ENCODE measurements at regions of chr1 and their contacts with region 1.

Region 1: DNA sequence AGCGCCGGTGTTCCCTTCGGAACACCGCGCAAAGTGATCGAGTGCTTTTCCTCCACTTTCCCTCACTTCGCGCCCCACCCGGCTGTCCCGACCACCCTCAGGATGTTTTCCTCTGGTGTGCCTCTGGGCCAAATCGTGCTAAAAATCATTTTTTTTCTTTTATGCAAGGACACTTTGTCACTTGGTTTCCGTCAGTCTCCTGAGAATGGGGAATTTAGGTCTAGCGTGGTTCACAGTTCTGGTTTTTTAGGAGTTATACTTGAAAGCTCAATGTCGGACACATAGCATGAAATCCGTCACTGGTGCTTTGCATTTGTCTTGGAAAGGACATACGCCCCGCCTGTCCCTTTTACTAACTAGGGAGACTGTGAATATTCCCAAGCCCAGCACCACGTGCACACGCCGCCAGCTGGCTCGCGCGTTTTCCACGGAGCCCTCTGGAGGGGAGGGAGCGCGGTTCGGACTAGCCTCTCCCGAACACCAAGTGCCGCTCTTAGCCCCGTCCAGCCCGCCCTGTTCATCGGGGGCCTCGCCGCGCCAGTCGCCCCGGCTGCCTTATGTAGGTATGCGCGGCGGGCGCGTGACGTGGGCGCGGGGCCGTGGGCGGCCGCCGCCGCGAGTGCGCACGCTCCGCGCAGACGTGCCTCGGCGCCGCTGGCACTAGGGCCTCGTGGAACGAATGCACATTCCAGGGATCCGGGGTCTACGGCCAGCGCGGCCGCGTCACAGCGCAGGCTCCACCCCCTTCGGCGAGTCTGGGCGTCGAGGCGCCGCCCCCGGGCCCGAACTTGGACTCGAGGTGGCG is 572 bp upstream of the IRF2BP2 start:
- DNase-seq: peak; percentile 93
- H3K4me3 ChIP-seq: peak overlapping the region; percentile 43 to 48
- H3K27ac ChIP-seq: peak overlapping the region; percentile 98 to 99
- H3K4me1 ChIP-seq: peaks cover 9% of the 10 kb centered on the region
- H3K27me3 ChIP-seq: no peaks in the 10 kb centered on the region
- CTCF ChIP-seq: peak in 2 of 4 experiments; percentile 28 to 42
- POLR2A ChIP-seq: peak; percentile 92

Region 2: DNA sequence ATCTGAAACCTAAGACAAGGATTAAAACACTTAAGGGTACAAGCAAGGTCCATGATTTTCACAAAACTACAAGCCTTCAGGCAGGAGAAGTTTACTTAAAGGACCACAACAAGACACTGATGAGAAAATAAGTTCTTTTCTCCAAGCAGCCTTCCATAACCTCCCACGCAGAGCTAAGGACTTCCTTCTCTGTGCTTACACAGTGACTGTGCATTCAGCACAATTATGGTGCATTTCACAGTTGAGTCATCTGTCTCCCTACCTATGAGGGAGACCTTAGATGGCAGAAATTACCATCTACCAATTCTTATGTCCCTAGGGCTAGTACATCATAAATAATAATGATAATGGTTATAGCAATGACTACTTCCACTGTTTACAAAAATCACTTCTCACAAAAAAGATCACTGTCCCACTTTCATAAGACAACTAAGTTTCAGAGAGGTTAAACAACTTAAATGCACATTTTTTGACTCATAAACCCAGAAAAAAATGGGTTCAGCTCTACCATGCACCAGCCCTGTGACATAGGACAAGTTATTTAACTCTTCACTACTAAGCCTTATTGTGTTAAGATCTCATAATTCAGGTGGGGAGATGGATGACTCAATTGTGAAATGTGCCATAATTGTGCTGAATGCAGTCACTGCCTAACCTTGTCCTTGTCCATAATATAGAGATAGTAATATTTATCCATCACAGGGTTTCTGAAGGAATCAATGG is 176.8 kb before region 1 on chr1:
- intact Hi-C with region 1: no loop called
- DNase-seq: no peak
- H3K4me3 ChIP-seq: no peak overlapping the region
- H3K27ac ChIP-seq: no peak overlapping the region
- H3K4me1 ChIP-seq: no peaks in the 10 kb centered on the region
- H3K27me3 ChIP-seq: no peaks in the 10 kb centered on the region
- CTCF ChIP-seq: no peak
- POLR2A ChIP-seq: no peak

Region 3: DNA sequence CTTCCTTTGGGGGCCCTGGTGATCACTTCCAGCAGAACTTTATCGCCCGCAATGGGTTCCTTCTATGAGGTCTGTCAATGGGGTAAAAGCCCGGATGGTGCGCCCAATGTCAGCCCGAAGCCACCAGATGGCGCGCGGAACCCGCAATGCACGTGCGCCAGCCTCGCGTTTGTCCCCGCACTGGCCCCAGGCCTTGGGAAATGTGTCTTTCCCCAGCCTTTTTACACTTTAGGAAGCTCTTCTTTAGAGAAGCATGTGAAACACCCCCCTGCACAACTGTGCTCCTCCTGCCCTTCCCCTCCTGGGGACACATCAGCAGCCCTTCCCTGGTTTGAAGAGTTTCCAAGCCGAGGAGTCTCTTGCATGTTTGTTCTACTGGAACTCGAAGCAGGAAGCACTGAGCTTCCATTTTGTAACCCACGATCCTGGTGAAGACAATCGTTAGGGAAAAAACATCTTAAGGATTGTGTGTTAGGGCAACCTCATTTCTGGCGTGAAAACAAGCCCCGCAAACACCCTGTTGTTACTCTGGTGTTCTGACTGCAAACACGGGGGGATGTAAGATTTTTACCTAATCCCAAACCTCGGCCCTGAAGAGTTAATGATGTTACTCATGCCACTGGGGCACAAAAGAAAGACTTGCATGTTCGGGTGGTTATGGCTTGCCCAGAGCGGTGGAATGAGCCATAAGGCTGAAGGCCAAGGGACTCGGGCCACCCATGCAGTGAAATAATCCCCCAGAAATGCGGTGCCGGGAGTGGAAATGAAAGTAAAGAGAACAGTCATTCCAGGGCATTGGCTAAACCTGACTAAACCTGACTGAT is 111.2 kb before region 1 on chr1:
- intact Hi-C with region 1: loop called (anchors 5 kb)
- DNase-seq: peak; percentile 91
- H3K4me3 ChIP-seq: no peak overlapping the region
- H3K27ac ChIP-seq: peak overlapping the region; percentile 75 to 84
- H3K4me1 ChIP-seq: peaks cover 4% of the 10 kb centered on the region
- H3K27me3 ChIP-seq: no peaks in the 10 kb centered on the region
- CTCF ChIP-seq: peak; percentile 89 to 99 (median 96)
- POLR2A ChIP-seq: no peak

Region 4: DNA sequence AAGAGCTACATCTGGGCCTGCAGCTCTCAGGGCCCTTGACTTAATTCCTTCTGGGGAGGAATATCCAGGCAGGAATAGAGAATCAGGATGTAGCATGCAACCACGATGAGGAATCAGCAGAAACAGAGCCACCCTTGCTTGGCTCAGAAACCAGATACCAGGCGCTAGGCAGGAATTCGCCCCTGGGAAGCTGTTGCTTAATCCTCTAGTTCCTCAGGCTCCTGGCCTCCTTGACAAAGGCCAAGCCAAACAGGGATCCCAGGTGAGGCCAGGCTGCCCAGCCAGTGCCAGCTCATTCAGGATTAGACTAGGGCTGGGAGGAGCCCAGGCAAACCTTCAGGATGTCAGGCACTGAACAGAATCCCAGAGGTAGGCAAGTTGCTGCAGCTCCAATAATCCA is 47.6 kb after region 1 on chr1:
- intact Hi-C with region 1: no loop called
- DNase-seq: peak; percentile 54
- H3K4me3 ChIP-seq: no peak overlapping the region
- H3K27ac ChIP-seq: peak overlapping the region; percentile 44 to 57
- H3K4me1 ChIP-seq: peaks cover 3% of the 10 kb centered on the region
- H3K27me3 ChIP-seq: no peaks in the 10 kb centered on the region
- CTCF ChIP-seq: no peak
- POLR2A ChIP-seq: no peak

Region 5: DNA sequence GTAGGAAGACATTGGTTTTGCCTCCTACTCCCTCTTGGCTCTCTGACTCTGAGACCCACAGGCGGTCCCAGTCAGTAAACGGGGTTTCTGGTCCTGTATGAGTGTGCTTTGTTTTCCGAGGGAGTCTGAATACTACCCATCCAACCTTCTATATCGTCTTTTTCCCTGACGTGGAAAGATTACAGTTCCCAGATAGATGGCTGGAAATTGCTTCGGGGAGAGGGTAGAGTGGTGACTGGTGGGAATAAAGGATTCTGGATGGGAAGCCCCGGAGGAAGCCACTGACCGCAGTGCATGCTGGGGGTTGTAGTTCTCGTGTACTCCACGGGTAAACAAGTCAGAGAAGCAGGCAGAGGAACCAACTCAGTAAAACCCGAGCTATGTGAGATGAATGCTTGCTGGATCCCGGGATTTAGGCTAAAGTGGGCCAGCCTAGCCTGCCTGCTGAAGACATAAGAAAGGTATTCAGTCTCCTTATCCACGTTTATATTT is 65.6 kb after region 1 on chr1:
- intact Hi-C with region 1: no loop called
- DNase-seq: peak; percentile 33
- H3K4me3 ChIP-seq: no peak overlapping the region
- H3K27ac ChIP-seq: no peak overlapping the region
- H3K4me1 ChIP-seq: no peaks in the 10 kb centered on the region
- H3K27me3 ChIP-seq: no peaks in the 10 kb centered on the region
- CTCF ChIP-seq: no peak
- POLR2A ChIP-seq: no peak

Region 6: GRCh38 chr1:234862944-234863515 is 252.5 kb after region 1 on chr1:
- intact Hi-C with region 1: loop called (anchors 5 kb)
- DNase-seq: peak; percentile 86
- H3K4me3 ChIP-seq: no peak overlapping the region
- H3K27ac ChIP-seq: peak overlapping the region; percentile 64 to 73
- H3K4me1 ChIP-seq: peaks cover 9% of the 10 kb centered on the region
- H3K27me3 ChIP-seq: no peaks in the 10 kb centered on the region
- CTCF ChIP-seq: no peak
- POLR2A ChIP-seq: no peak

Region 7: GRCh38 chr1:234918181-234918841 is 307.8 kb after region 1 on chr1:
- intact Hi-C with region 1: loop called (anchors 2 kb)
- DNase-seq: peak; percentile 73
- H3K4me3 ChIP-seq: no peak overlapping the region
- H3K27ac ChIP-seq: peak overlapping the region; percentile 54 to 68
- H3K4me1 ChIP-seq: peaks cover 21% of the 10 kb centered on the region
- H3K27me3 ChIP-seq: no peaks in the 10 kb centered on the region
- CTCF ChIP-seq: no peak
- POLR2A ChIP-seq: no peak

Region 8: GRCh38 chr1:234970731-234971476 is 360.4 kb after region 1 on chr1:
- intact Hi-C with region 1: loop called (anchors 5 kb)
- DNase-seq: peak; percentile 68
- H3K4me3 ChIP-seq: no peak overlapping the region
- H3K27ac ChIP-seq: peak overlapping the region; percentile 72
- H3K4me1 ChIP-seq: peaks cover 9% of the 10 kb centered on the region
- H3K27me3 ChIP-seq: no peaks in the 10 kb centered on the region
- CTCF ChIP-seq: no peak
- POLR2A ChIP-seq: no peak

Region 9: GRCh38 chr1:234997201-234997895 is 386.8 kb after region 1 on chr1:
- intact Hi-C with region 1: loop called (anchors 1 kb)
- DNase-seq: peak; percentile 98
- H3K4me3 ChIP-seq: no peak overlapping the region
- H3K27ac ChIP-seq: peak overlapping the region; percentile 86 to 89
- H3K4me1 ChIP-seq: peaks cover 12% of the 10 kb centered on the region
- H3K27me3 ChIP-seq: no peaks in the 10 kb centered on the region
- CTCF ChIP-seq: peak in 1 of 4 experiments; percentile 17
- POLR2A ChIP-seq: peak; percentile 38

Region 10: GRCh38 chr1:235075188-235075926 is 464.8 kb after region 1 on chr1:
- intact Hi-C with region 1: loop called (anchors 5 kb)
- DNase-seq: peak; percentile 42
- H3K4me3 ChIP-seq: no peak overlapping the region
- H3K27ac ChIP-seq: peak overlapping the region; percentile 85 to 90
- H3K4me1 ChIP-seq: peaks cover 25% of the 10 kb centered on the region
- H3K27me3 ChIP-seq: no peaks in the 10 kb centered on the region
- CTCF ChIP-seq: no peak
- POLR2A ChIP-seq: no peak